Spleen (tissue), 13 donors: ENCODE measurements at regions of chr19 and their contacts with region 1.

Region 1: DNA sequence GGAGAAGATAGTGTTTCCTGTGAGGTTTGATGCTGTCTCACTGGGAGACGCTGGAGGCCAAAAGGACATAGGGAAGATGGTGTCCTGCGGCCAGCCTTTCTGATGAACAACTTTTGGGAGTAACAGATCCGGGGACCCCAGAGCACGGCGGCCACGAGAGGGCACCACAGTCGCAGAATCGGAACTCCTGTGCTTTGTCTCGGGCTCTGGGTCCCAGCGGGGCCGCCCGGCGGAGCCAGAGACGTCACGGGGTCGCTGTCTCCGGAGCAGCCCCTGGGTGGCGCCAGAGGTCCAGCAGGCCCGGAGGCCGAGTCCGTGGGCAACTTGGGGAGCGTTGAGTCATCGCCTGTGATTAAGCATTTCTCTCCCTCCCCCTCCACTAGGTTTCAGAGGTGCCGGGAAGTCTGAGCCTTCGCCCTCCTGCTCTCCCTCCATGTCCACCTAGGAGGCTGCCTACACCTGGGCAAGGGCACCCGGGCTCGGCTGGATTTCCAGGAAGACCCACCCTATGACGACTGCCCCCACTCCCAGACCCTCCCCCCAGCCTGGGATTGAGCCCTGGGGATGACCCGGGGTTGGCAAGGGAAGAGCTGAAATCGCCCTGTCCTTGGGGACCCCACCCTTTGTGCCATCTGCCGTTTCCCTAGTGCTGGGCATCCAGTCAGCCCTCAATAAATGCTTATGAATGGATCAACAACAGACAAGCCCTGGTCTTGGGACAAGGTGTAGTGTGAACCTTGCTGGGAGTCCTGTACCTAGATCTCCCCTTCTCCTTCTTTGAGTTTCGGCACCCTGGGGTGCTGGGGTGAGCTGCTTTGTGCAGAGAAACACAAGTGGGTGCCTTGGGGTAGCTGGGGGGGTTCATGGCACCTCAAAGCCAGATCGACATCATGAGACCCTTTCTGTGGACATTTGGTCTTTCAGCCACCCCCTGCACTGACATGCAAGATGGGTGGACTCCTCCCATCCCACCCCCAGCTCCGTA is 3.4 kb downstream of the NANOS3 start:
- DNase-seq: peak; percentile 100
- H3K4me3 ChIP-seq: peak overlapping the region in 3 of 8 donors; percentile 14 to 54 (median 19)
- H3K27ac ChIP-seq: peak overlapping the region; percentile 48 to 87 (median 76)
- H3K4me1 ChIP-seq: peaks cover 22 to 57% (median 37%) of the 10 kb centered on the region in 6 donors
- H3K27me3 ChIP-seq: peaks cover 0 to 6% (median 0%) of the 10 kb centered on the region in 7 donors
- CTCF ChIP-seq: peak; percentile 99 to 100 (median 100)
- POLR2A ChIP-seq: no peak

Region 2: GRCh38 chr19:13839130-13839937 is 41.0 kb before region 1 on chr19:
- intact Hi-C with region 1: no loop called
- DNase-seq: peak; percentile 98
- H3K4me3 ChIP-seq: peak overlapping the region; percentile 57 to 94 (median 77)
- H3K27ac ChIP-seq: peak overlapping the region; percentile 91 to 100 (median 98)
- H3K4me1 ChIP-seq: peaks cover 62 to 97% (median 91%) of the 10 kb centered on the region in 6 donors
- H3K27me3 ChIP-seq: no peaks in the 10 kb centered on the region
- CTCF ChIP-seq: peak in 5 of 11 experiments; percentile 6 to 45 (median 31)
- POLR2A ChIP-seq: peak; percentile 40 to 79 (median 65)

Region 3: DNA sequence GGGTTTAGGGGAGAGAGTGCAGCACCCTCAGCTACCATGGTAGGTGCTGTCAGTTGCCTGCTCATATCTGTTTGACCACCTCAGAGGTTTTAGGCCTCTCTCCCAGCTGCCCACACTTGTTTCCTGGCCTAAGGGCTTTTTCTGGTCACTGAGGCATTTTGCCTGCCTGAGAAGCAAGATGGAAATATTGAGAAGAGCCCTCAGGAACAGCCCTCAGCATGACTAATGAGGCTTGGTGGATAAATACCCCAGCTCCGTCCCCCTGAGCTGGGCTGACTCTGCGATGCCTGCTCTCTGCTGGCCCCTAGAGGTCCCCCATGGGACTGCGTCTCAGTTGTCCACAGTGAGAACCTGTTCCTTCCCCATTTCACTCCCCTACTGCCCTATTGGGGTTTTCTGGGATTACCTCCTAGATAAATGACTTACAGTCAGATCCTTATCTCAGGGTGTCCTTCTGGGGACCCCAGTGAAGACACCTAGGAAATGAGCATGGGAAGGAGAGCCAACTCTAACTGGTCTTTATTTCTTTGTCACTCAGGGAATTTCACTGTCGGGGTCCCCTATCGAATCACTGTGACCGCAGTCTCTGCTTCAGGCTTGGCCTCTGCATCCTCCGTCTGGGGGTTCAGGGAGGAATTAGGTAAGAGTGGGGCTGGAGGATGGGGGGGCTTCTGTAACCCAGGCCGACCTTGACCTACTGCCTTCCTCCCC is 168.2 kb after region 1 on chr19:
- intact Hi-C with region 1: loop called (anchors 10 kb)
- DNase-seq: peak; percentile 90
- H3K4me3 ChIP-seq: no peak overlapping the region
- H3K27ac ChIP-seq: peak overlapping the region in 1 of 8 donors; percentile 15
- H3K4me1 ChIP-seq: peaks cover 0 to 5% (median 0%) of the 10 kb centered on the region in 6 donors
- H3K27me3 ChIP-seq: no peaks in the 10 kb centered on the region
- CTCF ChIP-seq: peak; percentile 61 to 95 (median 85)
- POLR2A ChIP-seq: no peak

Region 4: GRCh38 chr19:14073261-14073924 is 193.0 kb after region 1 on chr19:
- intact Hi-C with region 1: loop called (anchors 5 kb)
- DNase-seq: peak; percentile 95
- H3K4me3 ChIP-seq: peak overlapping the region; percentile 54 to 75 (median 60)
- H3K27ac ChIP-seq: peak overlapping the region; percentile 49 to 92 (median 89)
- H3K4me1 ChIP-seq: peaks cover 31 to 63% (median 46%) of the 10 kb centered on the region in 6 donors
- H3K27me3 ChIP-seq: peaks cover 0 to 29% (median 0%) of the 10 kb centered on the region in 7 donors
- CTCF ChIP-seq: peak in 7 of 11 experiments; percentile 2 to 68 (median 34)
- POLR2A ChIP-seq: no peak